ENCODE measurements at regions of chr11 and their contacts with region 1.

Region 1: DNA sequence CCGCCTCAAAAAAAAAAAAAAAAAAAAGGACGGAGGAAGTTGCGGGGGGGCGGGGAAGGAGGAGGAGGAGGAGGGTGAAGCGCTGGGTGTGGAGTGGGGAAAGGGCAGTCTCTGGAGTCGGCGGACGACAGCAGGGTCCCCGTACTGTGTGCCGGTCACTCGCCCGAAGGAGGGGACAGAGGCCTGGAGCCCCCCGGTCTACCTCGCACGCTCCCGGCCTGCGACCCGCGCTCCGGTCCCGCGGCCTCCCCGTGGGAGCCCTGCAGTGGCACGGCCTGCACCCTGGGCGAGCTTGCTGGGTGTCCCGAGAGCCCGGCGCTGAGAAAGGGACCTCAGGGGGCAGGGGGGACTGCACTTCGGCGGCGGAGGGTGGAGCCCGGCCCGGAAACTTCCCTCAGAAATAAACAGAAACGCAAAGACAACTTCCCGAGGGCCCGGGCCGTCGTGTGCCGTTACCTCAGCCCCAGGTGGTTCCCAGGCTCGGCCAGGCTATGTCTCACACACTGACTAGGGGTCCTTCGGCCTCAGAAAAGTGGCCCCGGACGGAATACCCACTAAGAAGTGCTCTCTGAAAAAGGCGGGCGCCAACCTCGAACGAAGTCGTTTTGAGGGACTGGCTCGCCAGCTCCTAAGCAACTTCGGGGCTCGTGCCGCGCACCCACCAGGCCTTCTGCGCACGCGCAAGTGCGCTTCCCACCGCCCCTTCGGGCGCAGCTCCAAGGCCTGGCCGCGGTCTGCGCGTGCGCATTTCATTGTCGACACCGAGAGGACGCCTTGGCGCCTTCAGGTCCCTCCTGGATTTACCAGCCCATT is at the start of gene MAJIN:
- DNase-seq: no peak
- H3K4me3 ChIP-seq: no peak within 1 kb of the TSS
- H3K27ac ChIP-seq: peak within 1 kb of the TSS; percentile 36
- H3K4me1 ChIP-seq: peaks cover 20% of the 10 kb centered on the region
- H3K27me3 ChIP-seq: no peaks in the 10 kb centered on the region
- CTCF ChIP-seq: no peak
- total RNA-seq, gene MAJIN: not detected

Region 2: DNA sequence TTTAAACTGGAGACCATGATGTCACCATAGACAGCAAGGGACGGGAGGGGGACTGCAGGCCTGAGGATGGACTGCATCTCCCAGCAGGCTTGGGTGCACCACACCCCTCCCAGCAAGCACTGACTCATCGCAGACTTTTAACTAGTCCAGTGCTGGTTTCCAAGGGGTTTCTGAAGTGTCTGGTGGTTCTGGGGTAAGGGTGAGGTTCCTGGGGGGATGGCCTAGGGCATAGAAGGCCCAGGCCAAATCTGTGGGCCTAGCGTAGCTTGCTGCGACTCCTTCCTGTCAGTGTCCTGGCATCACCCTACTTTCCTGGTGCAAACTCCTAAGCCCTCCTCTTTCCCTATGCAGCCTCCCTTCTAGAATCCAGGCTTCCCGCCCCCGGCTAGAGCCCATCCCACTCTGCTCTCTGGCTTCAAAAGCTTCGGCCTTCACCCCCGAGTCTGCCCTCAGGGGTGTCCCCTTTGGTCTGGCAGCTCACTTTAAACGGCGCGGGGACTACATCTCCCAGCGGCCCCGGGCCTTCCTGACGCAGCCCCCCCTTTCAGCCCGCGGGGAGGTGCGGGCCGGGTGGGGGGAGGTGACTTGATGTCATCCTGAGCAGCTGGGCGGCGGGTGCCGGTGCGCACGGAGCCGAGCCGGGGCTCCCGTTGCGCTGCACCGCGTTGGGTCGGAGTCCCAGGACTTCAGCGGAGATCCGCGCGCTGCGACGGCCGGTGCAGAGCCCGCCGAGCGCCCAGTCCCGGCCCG is 47.4 kb before region 1 on chr11 and contains the start of gene PPP2R5B:
- CTCF ChIA-PET with region 1: no interaction called
- dilution Hi-C with region 1: no loop called
- in situ Hi-C with region 1: no loop called
- intact Hi-C with region 1: loop called (anchors 1 kb)
- DNase-seq: peak; percentile 88
- H3K4me3 ChIP-seq: peak within 1 kb of the TSS; percentile 77 to 88 (median 78)
- H3K27ac ChIP-seq: peak within 1 kb of the TSS; percentile 70
- H3K4me1 ChIP-seq: peaks cover 10% of the 10 kb centered on the region
- H3K27me3 ChIP-seq: no peaks in the 10 kb centered on the region
- CTCF ChIP-seq: no peak
- total RNA-seq, gene PPP2R5B: 13.8 to 32.7 TPM

Region 3: DNA sequence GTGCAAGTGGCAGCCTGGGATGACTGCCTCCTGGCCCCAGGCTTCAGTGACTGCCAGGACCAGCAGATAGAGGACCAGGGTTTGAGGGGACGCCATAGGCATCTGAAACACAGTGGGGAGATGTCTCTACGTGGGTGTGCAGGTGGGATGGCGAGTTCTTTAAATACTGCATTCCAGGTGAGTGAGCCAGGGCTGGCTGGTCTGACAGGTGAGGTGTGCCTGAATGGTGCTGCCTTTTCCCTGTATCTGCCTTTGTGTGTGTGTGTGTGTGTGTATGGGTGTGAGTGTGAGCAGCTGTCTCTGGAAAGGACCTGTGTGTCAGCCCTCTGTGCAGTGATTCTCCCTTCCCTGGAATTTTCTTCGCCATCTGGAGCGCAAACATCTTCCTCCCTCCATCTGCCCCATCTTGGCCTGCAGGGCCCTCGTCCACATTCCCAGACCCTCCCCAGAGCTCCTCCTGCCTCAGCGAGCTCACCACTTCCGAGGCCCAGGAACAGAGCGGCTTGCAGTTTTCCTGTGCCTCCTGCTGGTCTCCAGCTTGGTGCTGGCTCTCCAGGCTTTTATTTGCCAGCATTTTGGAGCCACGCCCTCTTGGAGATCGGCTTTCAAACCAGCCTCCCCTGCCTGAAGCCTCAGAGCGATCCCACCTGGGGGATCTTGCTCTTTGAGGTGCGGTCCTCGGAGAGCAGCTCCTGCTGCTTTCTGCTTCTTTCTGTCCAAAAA is 36.1 kb before region 1 on chr11 and contains the start of gene GPHA2:
- CTCF ChIA-PET with region 1: no interaction called
- dilution Hi-C with region 1: loop called (anchors 5 kb)
- in situ Hi-C with region 1: no loop called
- intact Hi-C with region 1: no loop called
- DNase-seq: no peak
- H3K4me3 ChIP-seq: no peak within 1 kb of the TSS
- H3K27ac ChIP-seq: no peak within 1 kb of the TSS
- H3K4me1 ChIP-seq: no peaks in the 10 kb centered on the region
- H3K27me3 ChIP-seq: no peaks in the 10 kb centered on the region
- CTCF ChIP-seq: no peak
- total RNA-seq, gene GPHA2: not detected

Measured in mammary epithelial cell (primary cell).